Posterior cingulate gyrus (tissue), 11 donors: ENCODE measurements at regions of chr3 and their contacts with region 1.

Region 1: DNA sequence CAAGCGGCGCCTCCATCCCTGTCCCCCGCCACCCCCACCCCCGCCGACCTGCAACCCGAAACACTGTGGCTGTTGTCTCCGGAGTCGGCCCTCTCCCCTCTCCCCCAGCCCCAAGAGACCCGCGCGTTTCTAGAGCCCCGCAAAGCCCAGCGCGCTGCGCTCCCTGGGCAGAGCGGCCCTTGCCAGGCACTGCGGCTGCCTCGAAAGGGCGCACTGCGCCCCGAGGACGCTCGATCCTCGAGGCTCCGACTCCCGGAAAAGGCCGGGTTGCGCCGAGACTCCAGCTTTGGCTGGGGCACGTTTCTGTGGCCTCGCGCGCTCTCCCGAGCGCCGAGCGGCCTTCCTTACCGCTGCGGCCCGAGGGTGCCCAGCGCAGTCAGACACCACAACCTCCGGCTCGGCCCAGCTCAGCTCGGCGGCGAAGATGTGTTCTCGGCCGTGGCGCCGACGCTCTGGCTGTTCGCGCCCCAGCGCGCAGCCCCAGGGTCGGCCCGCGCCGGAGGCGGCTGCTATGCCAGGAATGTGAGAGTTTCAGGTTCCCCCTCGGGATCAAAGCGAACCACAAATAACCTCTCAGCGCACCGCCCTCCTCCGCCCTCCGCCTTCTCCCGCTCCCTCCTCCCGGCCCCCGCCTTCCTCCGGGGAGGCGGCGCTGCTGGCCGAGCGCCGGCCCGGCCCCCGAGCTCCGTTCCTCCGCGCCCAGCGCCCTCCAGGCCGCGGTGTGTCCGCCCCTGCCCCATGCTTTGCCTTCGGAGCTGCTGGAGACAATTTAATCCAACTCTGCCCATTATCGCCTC is at the start of gene AMOTL2:
- DNase-seq: peak; percentile 72 to 97 (median 76)

Region 2: DNA sequence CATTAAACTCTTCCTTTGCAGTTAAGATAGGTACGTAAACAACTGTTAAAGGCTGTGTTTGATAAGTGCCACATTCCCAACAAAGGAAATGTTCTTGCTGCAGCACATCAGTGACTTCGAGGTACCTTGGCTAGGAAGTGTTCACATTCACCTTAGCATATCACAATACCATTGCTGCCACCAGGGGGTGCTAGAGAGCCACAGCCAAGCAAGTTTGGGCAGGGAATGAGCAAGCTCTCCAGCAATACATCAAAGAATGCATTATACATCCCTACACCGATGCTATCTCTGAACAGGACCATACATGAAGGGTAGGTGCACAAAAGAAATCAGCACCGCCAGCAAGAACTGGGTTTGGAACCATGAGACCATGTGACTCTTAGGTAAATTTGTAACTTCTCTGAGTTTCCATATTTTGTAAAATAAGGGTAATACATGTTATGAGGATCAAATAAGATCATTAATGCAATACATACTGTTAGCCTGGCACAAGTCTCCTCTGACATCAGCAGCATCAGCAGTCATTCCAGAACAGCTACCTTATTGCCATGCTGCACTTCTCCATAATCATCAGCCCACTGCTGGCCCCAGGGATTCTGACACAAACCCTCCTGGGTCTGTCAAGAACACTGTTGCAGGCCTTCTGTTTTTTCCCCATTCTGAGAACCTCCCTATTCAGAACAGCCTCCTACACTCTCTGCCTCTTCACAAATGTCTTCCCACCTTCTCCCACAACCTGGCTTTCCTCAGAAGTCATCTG is 161.1 kb before region 1 on chr3:
- intact Hi-C with region 1: loop called (anchors 5 kb)
- DNase-seq: peak; percentile 62 to 98 (median 90)

Region 3: DNA sequence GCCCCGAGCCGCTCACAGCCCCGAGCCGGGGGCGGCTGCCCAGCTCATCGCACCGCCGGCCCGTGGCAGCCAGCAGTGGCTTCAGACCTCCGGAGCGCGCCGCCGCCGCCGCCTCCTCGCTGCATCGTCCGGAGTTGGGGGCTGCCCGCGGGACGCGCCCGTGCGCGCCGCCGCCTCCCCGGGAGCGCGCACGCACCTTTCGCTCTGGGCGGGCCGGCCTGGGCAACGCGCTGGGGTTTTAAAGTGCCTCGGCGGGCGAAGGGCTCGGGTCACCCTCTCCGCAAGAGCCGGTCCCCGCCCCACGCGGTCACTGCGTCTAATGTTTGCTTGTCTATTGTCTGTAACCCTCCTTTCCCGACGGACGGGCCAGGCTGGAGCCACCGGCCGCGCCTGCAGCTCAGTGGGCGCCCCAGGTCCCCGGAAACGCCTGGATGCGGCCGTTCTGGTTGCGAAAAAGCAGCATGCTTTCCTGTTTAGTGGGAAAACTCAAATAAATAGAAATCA is 123.4 kb before region 1 on chr3 and contains the start of gene RYK:
- intact Hi-C with region 1: loop called (anchors 5 kb)
- DNase-seq: peak; percentile 61 to 97 (median 74)

Region 4: DNA sequence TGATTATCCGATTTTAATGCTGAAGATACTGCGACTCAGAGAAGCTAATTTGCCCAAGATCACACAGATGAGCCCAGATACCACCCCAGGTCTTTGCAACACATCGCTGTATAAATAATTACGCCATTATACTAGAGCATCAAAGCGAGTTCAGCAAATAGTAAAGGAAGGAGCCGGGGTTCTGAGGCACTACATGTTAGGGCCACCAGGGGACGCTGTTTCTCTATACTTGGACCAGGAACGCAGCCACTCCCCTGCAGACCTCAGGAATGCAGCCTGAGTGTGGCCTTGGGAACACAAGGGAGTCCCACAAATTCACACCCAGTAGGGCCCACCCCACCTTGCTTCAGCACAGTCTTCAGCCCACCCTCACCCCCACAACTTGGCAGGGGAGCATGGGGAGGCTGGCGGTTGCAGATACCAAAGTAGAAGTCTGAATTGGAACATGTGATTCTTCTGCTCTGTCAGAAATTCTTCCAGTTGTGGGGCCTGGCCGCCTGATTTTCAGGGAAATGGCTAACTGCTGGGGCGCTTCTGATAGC is 65.8 kb before region 1 on chr3:
- intact Hi-C with region 1: loop called (anchors 5 kb)
- DNase-seq: peak; percentile 70 to 97 (median 88)

Region 5: DNA sequence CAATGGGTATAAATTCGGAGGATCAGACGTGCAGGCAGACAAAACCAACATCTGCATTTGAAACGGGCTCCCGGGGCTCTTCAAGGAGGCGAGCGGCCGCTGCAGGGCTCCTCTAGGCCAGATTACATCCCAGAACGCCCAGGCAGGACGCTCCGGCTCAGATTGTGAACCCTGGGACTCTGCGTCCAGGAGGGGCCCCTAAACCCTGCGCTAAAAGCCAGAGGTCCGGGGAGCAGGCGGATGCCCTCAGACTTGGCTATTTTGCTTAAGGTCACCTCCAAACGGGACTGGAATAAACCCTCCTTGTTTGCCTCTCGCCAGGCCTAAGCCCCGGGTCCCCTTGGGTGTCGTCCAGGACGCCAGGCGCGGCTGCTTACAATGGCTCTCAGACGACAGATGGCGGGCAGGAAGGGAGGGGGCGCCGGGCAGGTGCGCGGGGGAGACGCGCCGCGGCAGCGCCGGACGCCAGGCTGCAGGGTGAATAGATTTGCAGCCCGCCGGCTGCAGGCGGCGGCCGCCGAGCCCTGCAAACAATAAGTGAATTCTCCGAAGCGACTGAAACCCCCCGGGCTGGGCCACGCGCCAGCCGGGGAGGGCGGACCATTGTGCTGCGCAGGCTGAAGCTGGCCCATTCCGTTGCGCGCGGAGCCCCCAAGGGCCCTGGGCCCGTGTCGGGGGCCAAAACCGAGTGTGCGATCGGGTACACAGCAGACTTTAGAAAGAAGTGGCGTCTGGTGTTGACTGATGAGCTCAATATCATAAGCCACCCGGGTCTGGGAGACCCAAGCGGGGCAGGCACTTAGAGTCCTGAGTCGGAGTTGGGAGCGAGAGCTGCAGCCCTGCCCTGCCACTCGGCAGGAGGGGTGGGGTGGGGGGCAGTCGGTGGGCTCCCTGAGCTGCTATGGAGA is 32.4 kb after region 1 on chr3:
- intact Hi-C with region 1: loop called (anchors 2 kb)
- DNase-seq: peak; percentile 62 to 97 (median 82)

Region 6: DNA sequence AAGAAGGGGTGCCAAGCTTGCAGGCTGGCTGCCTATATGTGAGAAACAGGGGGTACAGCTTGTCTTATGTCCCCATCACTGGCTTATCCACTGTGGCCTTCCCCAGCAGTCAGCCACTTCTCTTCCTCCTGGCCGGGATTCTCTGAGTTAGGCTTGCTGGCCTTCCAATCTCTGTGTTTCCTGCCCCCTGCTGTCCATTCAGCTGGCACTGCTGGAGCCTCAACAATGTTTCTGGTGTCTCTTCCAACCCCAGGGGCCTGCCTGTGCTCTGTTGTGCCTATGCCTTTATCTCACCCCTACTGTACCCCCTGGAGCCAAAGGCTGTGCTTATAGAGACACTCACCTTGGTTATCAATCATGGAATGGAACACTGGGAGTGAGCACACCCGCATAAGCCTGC is 75.1 kb after region 1 on chr3:
- intact Hi-C with region 1: loop called (anchors 5 kb)
- DNase-seq: peak in 7 of 10 donors; percentile 44 to 94 (median 69)

Region 7: GRCh38 chr3:134473868-134474546 is 99.8 kb after region 1 on chr3:
- intact Hi-C with region 1: loop called (anchors 5 kb)
- DNase-seq: peak in 6 of 10 donors; percentile 55 to 85 (median 79)

Region 8: GRCh38 chr3:135007607-135008006 is 633.4 kb after region 1 on chr3:
- intact Hi-C with region 1: no loop called
- DNase-seq: no peak